ENCODE measurements at regions of chr2 and their contacts with region 1.

Region 1: GRCh38 chr2:241859436-241860183 is 916 bp upstream of the PDCD1 start:
- DNase-seq: peak in 2 of 3 donors; percentile 34 to 57
- ATAC-seq: peak; percentile 6 to 59 (median 40)
- H3K4me3 ChIP-seq: no peak overlapping the region
- H3K27ac ChIP-seq: peak overlapping the region; percentile 33 to 47 (median 44)
- H3K4me1 ChIP-seq: no peaks in the 10 kb centered on the region
- H3K27me3 ChIP-seq: no peaks in the 10 kb centered on the region
- CTCF ChIP-seq: no peak
- POLR2A ChIP-seq: no peak

Region 2: GRCh38 chr2:241724259-241724974 is 135.2 kb before region 1 on chr2:
- intact Hi-C with region 1: loop called in 1 of 2 experiments (anchors 10 kb)
- DNase-seq: no peak
- ATAC-seq: peak in 1 of 4 donors; percentile 4
- H3K4me3 ChIP-seq: no peak overlapping the region
- H3K27ac ChIP-seq: no peak overlapping the region
- H3K4me1 ChIP-seq: no peaks in the 10 kb centered on the region
- H3K27me3 ChIP-seq: no peaks in the 10 kb centered on the region
- CTCF ChIP-seq: peak in 3 of 4 donors; percentile 10 to 26 (median 24)
- POLR2A ChIP-seq: no peak